Heart right ventricle (tissue), 16 donors: ENCODE measurements at regions of chr14 and their contacts with region 1.

Region 1: DNA sequence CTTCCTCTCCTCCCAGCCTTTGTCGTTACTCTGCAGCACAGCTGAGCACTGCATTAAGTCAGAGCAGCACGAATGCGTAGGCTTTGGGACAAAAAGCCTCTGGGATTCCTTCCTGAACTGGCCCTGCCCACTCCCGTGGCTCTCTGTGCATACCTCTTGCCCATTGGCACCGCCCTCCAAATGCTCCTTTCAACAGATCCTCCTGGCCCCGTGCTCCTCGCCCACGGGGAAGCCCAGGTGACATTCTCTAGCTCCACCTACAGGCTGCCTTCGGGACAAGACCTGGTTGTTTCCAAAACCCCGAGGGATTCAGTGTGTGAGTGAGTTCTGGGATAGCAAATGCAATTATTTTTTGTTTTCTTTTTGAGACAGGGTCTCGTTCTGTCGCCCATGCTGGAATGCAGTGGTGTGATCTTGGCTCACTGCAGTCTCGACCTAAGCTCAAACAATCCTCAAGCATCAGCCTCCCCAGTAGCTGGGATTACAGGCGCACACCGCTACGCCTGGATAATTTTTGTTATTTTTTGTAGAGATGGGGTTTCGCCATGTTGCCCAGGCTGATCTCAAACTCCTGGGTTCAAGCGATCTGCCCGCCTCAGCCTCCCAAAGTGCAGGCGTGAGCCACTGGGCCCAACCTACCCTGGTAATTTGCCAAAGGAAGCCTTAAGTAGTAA is 17.9 kb upstream of the TDRD9 start:
- DNase-seq: peak; percentile 71 to 82
- ATAC-seq: peak; percentile 83 to 97 (median 95)
- H3K4me3 ChIP-seq: peak overlapping the region in 4 of 10 donors; percentile 19 to 34 (median 23)
- H3K27ac ChIP-seq: peak overlapping the region in 6 of 10 donors; percentile 4 to 53 (median 38)
- H3K4me1 ChIP-seq: peaks cover 0 to 14% (median 12%) of the 10 kb centered on the region in 9 donors
- H3K27me3 ChIP-seq: no peaks in the 10 kb centered on the region
- CTCF ChIP-seq: peak; percentile 76 to 91 (median 81)

Region 2: DNA sequence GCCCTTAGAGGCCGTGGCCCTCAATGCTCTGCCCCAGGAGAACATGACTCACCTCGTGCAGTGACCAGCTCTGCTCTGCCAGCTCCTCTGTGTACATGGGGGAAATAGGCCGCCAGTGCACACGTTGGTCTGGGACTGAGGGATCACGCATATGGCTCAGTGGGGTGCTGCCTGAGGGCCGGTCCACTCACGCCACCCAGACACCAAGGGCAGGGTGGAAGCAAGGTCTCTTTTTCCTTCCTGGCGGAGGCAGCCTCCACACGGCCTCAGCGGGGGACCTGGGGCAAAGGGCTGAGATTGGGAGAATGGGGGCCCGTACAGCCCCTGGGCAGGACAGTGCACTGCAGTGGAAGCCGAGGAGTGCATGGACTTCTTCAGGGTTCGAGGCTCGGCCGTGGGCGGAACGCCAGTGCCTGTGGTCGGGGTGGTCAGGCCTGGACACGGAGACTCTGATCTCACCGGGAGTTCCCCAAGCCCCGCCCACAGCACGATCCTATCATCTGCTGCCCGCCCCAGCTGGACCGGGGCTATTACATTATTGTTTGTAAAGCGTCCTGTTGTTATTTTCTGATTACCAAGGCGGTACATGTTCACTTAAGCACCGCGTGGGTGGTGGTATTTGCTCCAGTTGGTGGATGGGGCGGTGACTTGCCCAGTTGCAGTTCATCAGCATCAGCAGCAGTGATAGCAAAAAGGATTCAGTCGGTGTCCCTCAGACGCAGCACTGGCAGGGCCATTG is 20.9 kb before region 1 on chr14:
- intact Hi-C with region 1: loop called in 1 of 10 experiments (anchors 2 kb)
- DNase-seq: peak in 1 of 2 donors; percentile 37
- ATAC-seq: peak in 5 of 8 donors; percentile 3 to 43 (median 32)
- H3K4me3 ChIP-seq: no peak overlapping the region
- H3K27ac ChIP-seq: peak overlapping the region in 2 of 10 donors; percentile 20 to 44
- H3K4me1 ChIP-seq: peaks cover 8 to 35% (median 23%) of the 10 kb centered on the region in 9 donors
- H3K27me3 ChIP-seq: no peaks in the 10 kb centered on the region
- CTCF ChIP-seq: no peak